ENCODE measurements at regions of chr9 and their contacts with region 1.

Region 1: GRCh38 chr9:36873247-36873875 is 160.7 kb downstream of the PAX5 start:
- DNase-seq: peak; percentile 76 to 86 (median 82)
- ATAC-seq: peak; percentile 84
- H3K4me3 ChIP-seq: no peak overlapping the region
- H3K27ac ChIP-seq: no peak overlapping the region
- H3K4me1 ChIP-seq: no peaks in the 10 kb centered on the region
- H3K27me3 ChIP-seq: no peaks in the 10 kb centered on the region
- CTCF ChIP-seq: peak; percentile 75 to 92 (median 84)
- POLR2A ChIP-seq: no peak

Region 2: GRCh38 chr9:36479101-36479500 is 394.3 kb before region 1 on chr9:
- intact Hi-C with region 1: no loop called
- DNase-seq: no peak
- ATAC-seq: no peak
- H3K4me3 ChIP-seq: no peak overlapping the region
- H3K27ac ChIP-seq: no peak overlapping the region
- H3K4me1 ChIP-seq: no peaks in the 10 kb centered on the region
- H3K27me3 ChIP-seq: no peaks in the 10 kb centered on the region
- CTCF ChIP-seq: no peak
- POLR2A ChIP-seq: no peak

Region 3: DNA sequence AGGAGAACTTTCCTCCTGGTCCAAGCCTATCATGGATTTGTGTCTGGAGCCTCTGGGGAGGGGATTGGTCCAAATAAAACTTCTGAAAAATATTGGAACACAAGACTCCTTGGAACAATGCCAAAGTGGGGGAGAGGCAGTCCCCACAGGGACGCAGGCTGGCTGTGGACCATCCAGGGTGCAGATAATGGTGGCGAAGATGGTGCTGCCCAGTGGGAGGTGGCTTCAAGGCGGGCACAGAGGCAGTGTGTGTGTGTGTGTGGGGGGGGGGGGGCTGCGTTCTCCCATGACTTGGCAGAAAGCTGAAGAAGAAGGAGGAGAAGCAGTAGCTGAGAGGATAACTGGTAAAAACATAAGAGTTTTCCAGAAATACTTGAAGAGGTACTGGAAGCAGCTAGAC is 114.2 kb before region 1 on chr9:
- intact Hi-C with region 1: no loop called
- DNase-seq: no peak
- ATAC-seq: no peak
- H3K4me3 ChIP-seq: no peak overlapping the region
- H3K27ac ChIP-seq: no peak overlapping the region
- H3K4me1 ChIP-seq: no peaks in the 10 kb centered on the region
- H3K27me3 ChIP-seq: no peaks in the 10 kb centered on the region
- CTCF ChIP-seq: no peak
- POLR2A ChIP-seq: no peak

Region 4: GRCh38 chr9:36995927-36996705 is 122.8 kb after region 1 on chr9:
- intact Hi-C with region 1: loop called (anchors 10 kb)
- DNase-seq: peak; percentile 73 to 80 (median 78)
- ATAC-seq: peak; percentile 89
- H3K4me3 ChIP-seq: no peak overlapping the region
- H3K27ac ChIP-seq: no peak overlapping the region
- H3K4me1 ChIP-seq: no peaks in the 10 kb centered on the region
- H3K27me3 ChIP-seq: no peaks in the 10 kb centered on the region
- CTCF ChIP-seq: peak; percentile 45 to 78 (median 72)
- POLR2A ChIP-seq: no peak